HepG2 (cell line): ENCODE measurements at regions of chr10 and their contacts with region 1.

Region 1: DNA sequence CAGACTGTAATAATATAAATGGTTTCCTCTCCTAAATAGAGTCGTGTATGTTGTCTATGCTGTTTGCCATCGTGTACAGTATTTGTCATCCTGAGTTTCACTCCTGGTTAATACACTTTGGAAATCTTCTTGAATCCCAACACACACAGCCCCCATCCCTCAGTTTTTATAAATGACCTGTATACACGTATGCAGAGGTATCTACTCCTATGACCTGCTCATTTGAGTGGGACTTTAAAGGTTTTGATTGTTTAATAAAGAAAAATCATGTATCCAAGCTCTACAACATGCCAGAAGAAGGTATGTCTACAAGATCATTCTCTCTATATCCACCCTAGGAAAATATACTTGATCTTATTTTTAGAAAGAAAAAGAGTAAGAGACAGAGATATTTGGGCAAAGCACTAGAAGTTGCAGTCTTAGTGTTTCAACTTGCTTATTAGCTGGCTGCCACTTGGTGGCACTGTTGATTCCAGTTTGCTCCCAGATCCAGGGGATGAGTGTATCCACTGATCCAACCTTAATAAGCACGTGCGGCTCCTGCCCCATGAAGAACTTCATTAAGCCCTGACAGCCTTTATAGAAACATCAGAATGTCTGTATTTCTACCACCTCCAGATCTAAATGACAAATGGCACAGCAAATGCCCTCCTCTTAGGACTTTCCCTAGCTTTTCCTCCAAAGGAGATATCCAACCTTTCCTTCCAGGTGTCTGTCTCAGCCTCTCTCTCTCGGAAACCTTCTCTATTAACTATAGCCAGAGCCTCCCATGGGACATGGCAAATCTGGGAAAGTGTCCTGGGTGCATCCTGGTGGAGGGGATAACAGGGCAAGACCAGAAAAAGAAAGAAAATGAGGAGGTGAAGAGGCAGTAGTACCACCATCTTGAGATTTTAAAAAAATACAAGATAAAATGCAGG is 181.6 kb upstream of the NEBL start:
- DNase-seq: peak; percentile 61
- ATAC-seq: peak; percentile 96
- H3K4me3 ChIP-seq: no peak overlapping the region
- H3K27ac ChIP-seq: no peak overlapping the region
- H3K4me1 ChIP-seq: no peaks in the 10 kb centered on the region
- H3K27me3 ChIP-seq: no peaks in the 10 kb centered on the region
- CTCF ChIP-seq: peak; percentile 85
- EP300 ChIP-seq: no peak
- POLR2A ChIP-seq: no peak
- RAD21 ChIP-seq: peak; percentile 69; the same call in 1 of the 2 replicates

Region 2: GRCh38 chr10:21065621-21066248 is 12.9 kb before region 1 on chr10:
- CTCF ChIA-PET with region 1: no interaction called
- POLR2A ChIA-PET with region 1: no interaction called
- in situ Hi-C with region 1: no loop called
- intact Hi-C with region 1: no loop called
- DNase-seq: no peak
- ATAC-seq: no peak
- H3K4me3 ChIP-seq: no peak overlapping the region
- H3K27ac ChIP-seq: no peak overlapping the region
- H3K4me1 ChIP-seq: no peaks in the 10 kb centered on the region
- H3K27me3 ChIP-seq: peaks cover 0 to 10% of the 10 kb centered on the region in 2 experiments; a peak in 3 of 5 replicates
- CTCF ChIP-seq: no peak
- EP300 ChIP-seq: no peak
- POLR2A ChIP-seq: no peak
- RAD21 ChIP-seq: no peak

Region 3: DNA sequence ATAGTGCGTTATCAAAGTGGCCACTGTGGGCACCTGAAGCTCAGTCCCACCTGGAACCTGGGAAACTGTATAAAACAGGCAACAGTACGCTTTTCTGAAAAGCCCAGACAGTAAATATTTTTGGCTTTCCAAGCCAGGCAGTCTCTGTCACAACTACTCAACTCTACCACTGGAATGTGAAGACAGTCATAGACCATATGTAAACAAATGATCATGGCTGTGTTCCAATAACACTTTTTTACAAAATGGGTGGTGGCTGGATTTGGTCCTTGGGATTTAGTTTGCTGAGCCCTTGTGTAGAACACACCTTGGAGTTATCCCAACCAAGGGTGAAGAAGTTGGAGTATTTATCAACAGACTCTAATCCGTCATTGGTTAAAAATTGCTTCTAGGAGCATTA is 187.0 kb after region 1 on chr10:
- CTCF ChIA-PET with region 1: interaction called, 32 read pairs
- POLR2A ChIA-PET with region 1: no interaction called
- in situ Hi-C with region 1: loop called (anchors 5 kb)
- intact Hi-C with region 1: no loop called
- DNase-seq: peak; percentile 28
- ATAC-seq: no peak
- H3K4me3 ChIP-seq: no peak overlapping the region
- H3K27ac ChIP-seq: no peak overlapping the region
- H3K4me1 ChIP-seq: no peaks in the 10 kb centered on the region
- H3K27me3 ChIP-seq: 0 out of 5 replicates have a peak, but pooled peaks cover 0 to 13% of the 10 kb centered on the region in 2 experiments
- CTCF ChIP-seq: no peak
- EP300 ChIP-seq: no peak
- POLR2A ChIP-seq: no peak
- RAD21 ChIP-seq: no peak

Region 4: GRCh38 chr10:22648547-22648961 is 1569.9 kb after region 1 on chr10:
- CTCF ChIA-PET with region 1: no interaction called
- POLR2A ChIA-PET with region 1: no interaction called
- in situ Hi-C with region 1: no loop called
- intact Hi-C with region 1: loop called (anchors 5 kb)
- DNase-seq: no peak
- ATAC-seq: no peak
- H3K4me3 ChIP-seq: no peak overlapping the region
- H3K27ac ChIP-seq: no peak overlapping the region
- H3K4me1 ChIP-seq: peaks cover 7% of the 10 kb centered on the region; the same call in 1 of the 2 replicates
- H3K27me3 ChIP-seq: no peaks in the 10 kb centered on the region
- CTCF ChIP-seq: no peak
- EP300 ChIP-seq: no peak
- POLR2A ChIP-seq: no peak
- RAD21 ChIP-seq: no peak